ENCODE measurements at regions of chr11 and their contacts with region 1.

Region 1: GRCh38 chr11:3797329-3798095 is at the start of gene NUP98:
- DNase-seq: peak; percentile 99 to 100 (median 100)
- ATAC-seq: peak; percentile 97 to 98
- H3K4me3 ChIP-seq: peak within 1 kb of the TSS; percentile 90
- H3K27ac ChIP-seq: peak within 1 kb of the TSS; percentile 83
- H3K4me1 ChIP-seq: no peaks in the 10 kb centered on the region
- H3K27me3 ChIP-seq: no peaks in the 10 kb centered on the region
- total RNA-seq, gene NUP98: 38.8 to 55.9 (median 43.4) TPM

Region 2: DNA sequence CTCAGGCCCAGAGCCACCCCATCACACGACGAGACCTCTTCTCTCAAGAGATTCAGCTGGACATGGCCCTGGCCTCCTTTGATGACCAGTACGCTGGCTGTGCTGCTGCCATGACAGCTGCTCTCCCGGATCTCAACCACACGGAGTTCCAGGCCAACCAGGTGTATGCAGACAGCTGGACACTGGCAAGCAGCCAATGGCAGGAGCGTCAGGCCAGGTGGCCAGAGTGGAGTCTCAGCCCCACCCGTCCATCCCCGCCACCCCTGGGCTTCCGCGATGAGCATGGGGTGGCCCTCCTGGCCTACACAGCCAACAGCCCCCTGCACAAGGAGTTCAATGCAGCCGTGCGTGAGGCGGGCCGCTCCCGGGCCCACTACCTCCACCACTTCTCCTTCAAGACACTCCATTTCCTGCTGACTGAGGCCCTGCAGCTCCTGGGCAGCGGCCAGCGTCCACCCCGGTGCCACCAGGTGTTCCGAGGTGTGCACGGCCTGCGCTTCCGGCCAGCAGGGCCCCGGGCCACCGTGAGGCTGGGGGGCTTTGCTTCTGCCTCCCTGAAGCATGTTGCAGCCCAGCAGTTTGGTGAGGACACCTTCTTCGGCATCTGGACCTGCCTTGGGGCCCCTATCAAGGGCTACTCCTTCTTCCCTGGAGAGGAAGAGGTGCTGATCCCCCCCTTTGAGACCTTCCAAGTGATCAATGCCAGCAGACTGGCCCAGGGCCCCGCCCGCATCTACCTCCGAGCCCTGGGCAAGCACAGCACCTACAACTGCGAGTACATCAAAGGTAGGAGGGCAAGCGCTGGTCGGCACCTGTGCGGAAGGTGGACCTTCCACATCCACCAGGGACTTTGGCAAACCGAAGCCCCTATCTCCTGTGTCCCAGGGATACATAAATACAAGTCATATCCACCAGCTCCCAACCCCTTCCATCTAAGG is 137.7 kb before region 1 on chr11:
- intact Hi-C with region 1: no loop called
- DNase-seq: no peak
- ATAC-seq: peak; percentile 7 to 17
- H3K4me3 ChIP-seq: no peak overlapping the region
- H3K27ac ChIP-seq: no peak overlapping the region
- H3K4me1 ChIP-seq: no peaks in the 10 kb centered on the region
- H3K27me3 ChIP-seq: no peaks in the 10 kb centered on the region

Region 3: DNA sequence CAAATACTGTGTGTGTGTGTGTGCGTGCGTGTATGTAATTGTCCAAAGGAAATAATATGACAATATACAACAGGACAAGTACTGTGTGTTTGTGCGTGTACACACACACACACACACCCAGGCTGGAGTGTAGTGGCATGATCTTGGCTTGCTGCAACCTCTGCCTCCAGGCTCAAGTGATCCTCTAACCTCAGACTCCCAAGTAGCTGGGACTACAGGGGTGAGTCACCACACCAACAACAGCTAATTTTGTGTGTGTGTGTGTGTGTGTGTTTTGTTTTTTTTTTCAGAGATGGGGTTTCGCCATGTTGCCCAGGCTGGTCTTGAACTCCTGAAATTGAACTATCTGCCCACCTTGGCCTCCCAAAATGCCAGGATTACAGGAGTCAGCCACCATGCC is 61.7 kb before region 1 on chr11:
- intact Hi-C with region 1: no loop called
- DNase-seq: no peak
- ATAC-seq: no peak
- H3K4me3 ChIP-seq: no peak overlapping the region
- H3K27ac ChIP-seq: no peak overlapping the region
- H3K4me1 ChIP-seq: no peaks in the 10 kb centered on the region
- H3K27me3 ChIP-seq: no peaks in the 10 kb centered on the region

Region 4: DNA sequence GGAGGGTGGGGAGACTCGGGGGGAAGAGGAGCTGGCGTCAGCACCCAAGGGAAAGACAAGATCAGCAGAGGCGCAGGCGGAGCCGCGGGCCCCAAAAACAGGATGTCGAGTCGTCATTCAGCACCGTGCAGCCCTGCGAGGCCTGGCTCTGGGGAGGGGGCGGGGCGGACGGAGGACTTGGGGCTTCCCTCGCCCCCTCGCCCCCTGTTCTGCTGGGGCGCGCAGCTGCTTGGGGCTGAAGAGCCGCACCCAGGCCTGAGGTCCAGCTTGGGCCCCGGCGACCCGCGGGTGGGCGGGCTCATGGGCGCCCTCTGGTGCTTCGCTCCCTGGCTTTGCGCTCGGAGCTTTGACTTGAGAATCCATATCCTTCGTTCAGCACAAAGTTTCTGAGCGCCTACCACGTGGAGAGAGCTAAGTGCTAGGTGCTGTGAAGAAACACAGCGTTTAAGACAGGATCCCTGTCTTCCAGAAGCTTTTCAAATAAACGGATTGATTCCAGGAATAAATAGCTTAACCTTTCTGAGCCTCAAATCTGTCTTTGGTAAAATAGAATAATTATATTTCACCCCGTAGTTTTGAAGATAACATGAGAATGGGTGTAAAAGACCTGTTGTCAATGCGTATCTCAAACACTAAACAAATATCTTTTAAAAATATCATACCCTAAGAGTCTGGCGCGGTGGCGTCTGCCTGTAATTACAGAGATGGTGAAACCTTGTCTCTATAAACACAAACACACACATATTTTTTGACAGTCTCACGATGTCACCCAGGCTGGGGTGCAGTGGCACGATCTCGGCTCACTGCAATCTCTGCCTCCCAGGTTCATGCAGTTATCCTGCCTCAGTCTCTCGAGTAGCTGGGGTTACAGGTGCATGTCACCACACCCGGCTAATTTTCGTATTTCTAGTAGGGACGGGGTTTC is 44.2 kb after region 1 on chr11:
- intact Hi-C with region 1: loop called in 1 of 4 experiments (anchors 5 kb)
- DNase-seq: peak; percentile 88 to 95 (median 95)
- ATAC-seq: peak; percentile 79 to 82
- H3K4me3 ChIP-seq: peak overlapping the region; percentile 100
- H3K27ac ChIP-seq: peak overlapping the region; percentile 33
- H3K4me1 ChIP-seq: peaks cover 16% of the 10 kb centered on the region
- H3K27me3 ChIP-seq: no peaks in the 10 kb centered on the region

Measured in right cardiac atrium (tissue), 5 donors.